Panc1 (cell line): ENCODE measurements at regions of chr2 and their contacts with region 1.

Region 1: GRCh38 chr2:195318440-195319111 is 338.4 kb upstream of the SLC39A10 start:
- DNase-seq: no peak
- ATAC-seq: peak; percentile 72
- H3K4me3 ChIP-seq: no peak overlapping the region
- H3K27ac ChIP-seq: peak overlapping the region; percentile 48; the same call in 1 of the 2 replicates
- H3K4me1 ChIP-seq: peaks cover 16% of the 10 kb centered on the region; the same call in 1 of the 2 replicates
- H3K27me3 ChIP-seq: no peaks in the 10 kb centered on the region
- CTCF ChIP-seq: peak; percentile 69; the same call in 1 of the 2 replicates

Region 2: DNA sequence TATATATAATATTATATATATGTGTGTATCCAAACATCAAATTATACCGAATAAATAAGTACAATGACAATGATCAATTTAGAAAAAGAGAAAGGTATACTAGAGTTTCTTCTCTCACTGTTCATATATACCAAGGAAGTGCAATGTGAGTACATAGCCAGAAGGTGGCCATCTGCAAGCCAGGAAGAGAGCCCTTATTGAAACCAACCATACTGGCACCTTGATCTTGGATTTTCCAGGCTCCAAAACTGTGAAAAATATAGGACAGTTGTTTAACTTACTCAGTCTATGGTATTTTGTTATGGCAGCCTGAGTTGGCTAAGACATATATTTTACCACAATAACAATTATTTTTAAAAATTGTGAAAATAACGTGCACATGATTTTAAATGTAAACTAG is 1151.8 kb before region 1 on chr2:
- CTCF ChIA-PET with region 1: no interaction called
- POLR2A ChIA-PET with region 1: no interaction called
- in situ Hi-C with region 1: no loop called
- intact Hi-C with region 1: loop called (anchors 2 kb)
- DNase-seq: no peak
- ATAC-seq: no peak
- H3K4me3 ChIP-seq: no peak overlapping the region
- H3K27ac ChIP-seq: no peak overlapping the region
- H3K4me1 ChIP-seq: no peaks in the 10 kb centered on the region
- H3K27me3 ChIP-seq: no peaks in the 10 kb centered on the region
- CTCF ChIP-seq: peak; percentile 43; the same call in 1 of the 2 replicates

Region 3: GRCh38 chr2:194545978-194546377 is 772.6 kb before region 1 on chr2:
- CTCF ChIA-PET with region 1: no interaction called
- POLR2A ChIA-PET with region 1: no interaction called
- in situ Hi-C with region 1: no loop called
- intact Hi-C with region 1: loop called (anchors 5 kb)
- DNase-seq: no peak
- ATAC-seq: no peak
- H3K4me3 ChIP-seq: no peak overlapping the region
- H3K27ac ChIP-seq: no peak overlapping the region
- H3K4me1 ChIP-seq: no peaks in the 10 kb centered on the region
- H3K27me3 ChIP-seq: no peaks in the 10 kb centered on the region
- CTCF ChIP-seq: peak; percentile 21; the same call in 1 of the 2 replicates

Region 4: GRCh38 chr2:194870974-194871535 is 447.5 kb before region 1 on chr2:
- CTCF ChIA-PET with region 1: no interaction called
- POLR2A ChIA-PET with region 1: no interaction called
- in situ Hi-C with region 1: no loop called
- intact Hi-C with region 1: loop called (anchors 10 kb)
- DNase-seq: no peak
- ATAC-seq: no peak
- H3K4me3 ChIP-seq: no peak overlapping the region
- H3K27ac ChIP-seq: no peak overlapping the region
- H3K4me1 ChIP-seq: no peaks in the 10 kb centered on the region
- H3K27me3 ChIP-seq: no peaks in the 10 kb centered on the region
- CTCF ChIP-seq: no peak

Region 5: GRCh38 chr2:196068271-196069209 is 750.0 kb after region 1 on chr2 and contains the start of gene DNAH7:
- CTCF ChIA-PET with region 1: no interaction called
- POLR2A ChIA-PET with region 1: no interaction called
- in situ Hi-C with region 1: no loop called
- intact Hi-C with region 1: loop called (anchors 10 kb)
- DNase-seq: peak; percentile 65
- ATAC-seq: peak; percentile 98
- H3K4me3 ChIP-seq: peak within 1 kb of the TSS; percentile 85 to 86
- H3K27ac ChIP-seq: peak within 1 kb of the TSS; percentile 86
- H3K4me1 ChIP-seq: peaks cover 8% of the 10 kb centered on the region; the same call in 1 of the 2 replicates
- H3K27me3 ChIP-seq: peaks cover 2% of the 10 kb centered on the region; the same call in 1 of the 2 replicates
- CTCF ChIP-seq: peak; percentile 98
- total RNA-seq, gene DNAH7: 0.98 TPM